ENCODE measurements at regions of chr18 and their contacts with region 1.

Region 1: DNA sequence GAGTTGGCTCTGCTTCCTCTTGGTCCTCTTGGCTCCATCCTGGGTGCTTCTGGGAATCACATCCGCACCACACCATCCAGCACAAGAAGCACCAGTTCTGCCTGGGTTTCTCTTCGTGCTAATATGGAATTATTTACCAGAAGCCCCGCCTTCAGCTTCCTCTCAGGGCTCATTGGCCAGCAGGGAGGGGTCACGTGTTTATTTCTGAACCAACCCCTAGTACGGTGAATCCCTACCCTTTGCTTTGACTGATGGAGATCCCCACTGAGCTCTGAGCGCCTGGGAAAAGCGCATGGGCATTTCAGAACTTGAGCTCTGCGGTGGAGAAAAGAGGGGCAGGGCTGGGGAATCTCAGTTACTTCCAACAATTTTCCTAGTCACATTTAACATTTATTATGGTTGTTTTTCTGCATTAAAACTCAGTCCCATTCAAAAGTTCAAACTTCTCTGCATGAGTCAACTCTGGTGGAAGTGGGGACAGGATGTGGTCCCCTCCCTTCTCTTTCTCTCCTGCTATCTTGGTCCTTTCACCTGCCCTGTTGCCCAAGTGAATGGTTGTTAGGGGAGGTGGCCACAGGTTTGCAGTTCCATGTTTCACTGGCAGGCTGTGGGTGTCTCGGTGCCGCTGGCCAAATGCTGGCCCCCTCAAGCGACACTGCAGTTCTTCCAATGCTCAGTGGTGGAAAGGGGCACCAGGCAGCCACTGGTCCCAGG is 76.4 kb upstream of the TTC39C start:
- DNase-seq: no peak
- H3K4me3 ChIP-seq: no peak overlapping the region
- H3K27ac ChIP-seq: no peak overlapping the region
- H3K4me1 ChIP-seq: no peaks in the 10 kb centered on the region
- H3K27me3 ChIP-seq: no peaks in the 10 kb centered on the region
- CTCF ChIP-seq: no peak
- EP300 ChIP-seq: no peak
- POLR2A ChIP-seq: no peak

Region 2: DNA sequence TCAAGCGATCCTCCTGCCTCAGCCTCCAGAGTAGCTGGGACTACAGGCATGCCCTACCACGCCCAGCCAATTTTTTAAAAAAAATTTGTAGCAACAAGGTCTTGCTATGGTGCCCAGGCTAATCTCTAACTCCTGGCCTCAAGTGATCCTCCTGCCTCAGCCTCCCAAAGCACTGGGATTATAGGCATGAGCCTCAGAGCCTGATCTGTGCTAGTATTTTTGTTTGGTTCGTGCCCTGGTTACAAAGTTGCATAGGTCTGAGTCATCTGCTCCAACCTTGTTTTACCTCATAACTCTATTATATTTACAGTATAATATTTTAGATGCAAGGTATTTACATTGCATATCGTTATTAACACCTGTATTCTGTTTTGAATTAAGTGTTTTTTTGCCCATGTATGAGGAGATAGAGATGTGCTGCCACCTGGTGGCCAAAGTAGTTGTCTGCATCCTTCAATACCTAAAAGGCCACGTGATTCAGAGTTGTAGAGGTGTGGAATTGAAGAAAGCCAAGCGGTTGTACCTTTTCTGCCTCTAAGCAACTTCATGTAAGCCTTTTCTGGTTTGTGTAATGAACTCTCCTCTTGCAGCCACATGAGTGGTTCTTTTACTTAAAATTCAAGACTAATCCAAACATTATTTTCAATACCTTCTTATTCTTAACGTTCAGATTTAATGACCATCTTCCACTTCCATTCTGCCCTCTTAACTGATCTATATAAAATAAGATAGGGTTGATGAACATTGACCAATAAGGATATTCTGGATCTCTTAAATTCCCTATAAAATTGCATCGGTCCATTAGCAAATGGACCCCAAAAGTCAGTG is 180.8 kb after region 1 on chr18:
- intact Hi-C with region 1: loop called (anchors 10 kb)
- DNase-seq: peak; percentile 86 to 92
- H3K4me3 ChIP-seq: no peak overlapping the region
- H3K27ac ChIP-seq: no peak overlapping the region
- H3K4me1 ChIP-seq: peaks cover 0 to 12% (median 5%) of the 10 kb centered on the region in 4 donors
- H3K27me3 ChIP-seq: no peaks in the 10 kb centered on the region
- CTCF ChIP-seq: peak in 5 of 7 experiments; percentile 87 to 94 (median 92)
- EP300 ChIP-seq: no peak
- POLR2A ChIP-seq: no peak